BJ (cell line): ENCODE measurements at regions of chr20 and their contacts with region 1.

Region 1: GRCh38 chr20:9458138-9458796 is 56.1 kb upstream of the LAMP5 start:
- DNase-seq: no peak
- H3K4me3 ChIP-seq: no peak overlapping the region
- H3K27me3 ChIP-seq: no peaks in the 10 kb centered on the region
- CTCF ChIP-seq: peak; percentile 25; the same call in 1 of the 2 replicates

Region 2: DNA sequence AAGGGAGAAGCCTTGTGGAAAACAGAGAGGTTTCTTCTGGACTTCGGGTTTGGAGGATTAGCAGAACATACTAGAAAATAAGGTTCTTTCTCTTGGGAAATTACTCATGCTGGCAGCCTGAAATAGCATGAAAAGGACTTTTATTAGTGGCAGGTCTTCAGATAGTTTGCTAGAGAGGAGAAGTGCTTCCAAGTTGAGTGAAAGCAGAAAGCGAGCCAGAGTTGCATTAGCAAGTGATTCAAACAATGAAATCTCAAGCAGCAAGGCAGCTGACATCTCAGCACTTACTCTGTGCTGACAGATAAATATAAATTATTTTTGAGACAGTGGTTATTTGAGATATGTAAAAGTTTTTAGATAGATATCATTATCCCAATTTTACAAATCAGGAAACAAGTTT is 297.5 kb before region 1 on chr20:
- CTCF ChIA-PET with region 1: no interaction called
- POLR2A ChIA-PET with region 1: no interaction called
- DNase-seq: no peak
- H3K4me3 ChIP-seq: 0 out of 2 replicates have a peak overlapping the region, but pooled peaks have one; percentile 3
- H3K27me3 ChIP-seq: no peaks in the 10 kb centered on the region
- CTCF ChIP-seq: no peak

Region 3: GRCh38 chr20:9447182-9447581 is 11.1 kb before region 1 on chr20:
- CTCF ChIA-PET with region 1: interaction called, 10 read pairs
- POLR2A ChIA-PET with region 1: no interaction called
- DNase-seq: no peak
- H3K4me3 ChIP-seq: no peak overlapping the region
- H3K27me3 ChIP-seq: no peaks in the 10 kb centered on the region
- CTCF ChIP-seq: no peak

Region 4: GRCh38 chr20:9543214-9543613 is 84.9 kb after region 1 on chr20:
- CTCF ChIA-PET with region 1: no interaction called
- POLR2A ChIA-PET with region 1: no interaction called
- DNase-seq: no peak
- H3K4me3 ChIP-seq: no peak overlapping the region
- H3K27me3 ChIP-seq: no peaks in the 10 kb centered on the region; the same call in 1 of the 2 replicates
- CTCF ChIP-seq: no peak